H1 (cell line): ENCODE measurements at regions of chr12 and their contacts with region 1.

Region 1: GRCh38 chr12:57031138-57031725 is 14.9 kb upstream of the TAC3 start:
- DNase-seq: no peak
- H3K4me3 ChIP-seq: no peak overlapping the region
- H3K27ac ChIP-seq: no peak overlapping the region
- H3K4me1 ChIP-seq: peaks cover 0 to 8% (median 3%) of the 10 kb centered on the region in 4 experiments; a peak in 5 of 7 replicates
- H3K27me3 ChIP-seq: peaks cover 0 to 3% (median 0%) of the 10 kb centered on the region in 4 experiments; a peak in 1 of 7 replicates
- CTCF ChIP-seq: peak in 2 of 3 experiments; percentile 12 to 46; a peak in 3 of 4 replicates
- EP300 ChIP-seq: no peak
- POLR2A ChIP-seq: no peak
- RAD21 ChIP-seq: peak; percentile 42 to 58

Region 2: DNA sequence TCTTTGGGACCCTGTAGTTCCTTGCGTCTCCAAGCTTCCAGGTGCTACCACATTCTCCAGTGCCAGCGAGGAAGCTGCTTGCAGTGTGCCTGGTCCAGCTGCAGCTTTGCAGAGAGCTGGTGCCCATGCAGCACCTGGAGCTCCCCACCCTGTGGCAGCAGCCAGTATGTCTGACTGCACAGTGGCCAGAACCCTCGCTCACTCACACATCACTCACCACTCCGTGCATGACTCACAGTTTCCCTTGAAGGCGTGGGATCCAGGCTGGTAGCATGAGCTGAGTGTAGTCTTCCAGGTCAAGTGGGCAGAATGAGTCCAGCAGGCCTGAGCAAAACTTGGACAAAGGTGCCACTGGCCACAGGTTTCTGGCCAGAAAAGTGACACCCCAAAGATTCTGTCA is 130.6 kb before region 1 on chr12:
- CTCF ChIA-PET with region 1: no interaction called
- POLR2A ChIA-PET with region 1: no interaction called
- DNase-seq: no peak
- H3K4me3 ChIP-seq: no peak overlapping the region
- H3K27ac ChIP-seq: no peak overlapping the region
- H3K4me1 ChIP-seq: no peaks in the 10 kb centered on the region
- H3K27me3 ChIP-seq: no peaks in the 10 kb centered on the region
- CTCF ChIP-seq: no peak
- EP300 ChIP-seq: no peak
- POLR2A ChIP-seq: no peak
- RAD21 ChIP-seq: no peak

Region 3: DNA sequence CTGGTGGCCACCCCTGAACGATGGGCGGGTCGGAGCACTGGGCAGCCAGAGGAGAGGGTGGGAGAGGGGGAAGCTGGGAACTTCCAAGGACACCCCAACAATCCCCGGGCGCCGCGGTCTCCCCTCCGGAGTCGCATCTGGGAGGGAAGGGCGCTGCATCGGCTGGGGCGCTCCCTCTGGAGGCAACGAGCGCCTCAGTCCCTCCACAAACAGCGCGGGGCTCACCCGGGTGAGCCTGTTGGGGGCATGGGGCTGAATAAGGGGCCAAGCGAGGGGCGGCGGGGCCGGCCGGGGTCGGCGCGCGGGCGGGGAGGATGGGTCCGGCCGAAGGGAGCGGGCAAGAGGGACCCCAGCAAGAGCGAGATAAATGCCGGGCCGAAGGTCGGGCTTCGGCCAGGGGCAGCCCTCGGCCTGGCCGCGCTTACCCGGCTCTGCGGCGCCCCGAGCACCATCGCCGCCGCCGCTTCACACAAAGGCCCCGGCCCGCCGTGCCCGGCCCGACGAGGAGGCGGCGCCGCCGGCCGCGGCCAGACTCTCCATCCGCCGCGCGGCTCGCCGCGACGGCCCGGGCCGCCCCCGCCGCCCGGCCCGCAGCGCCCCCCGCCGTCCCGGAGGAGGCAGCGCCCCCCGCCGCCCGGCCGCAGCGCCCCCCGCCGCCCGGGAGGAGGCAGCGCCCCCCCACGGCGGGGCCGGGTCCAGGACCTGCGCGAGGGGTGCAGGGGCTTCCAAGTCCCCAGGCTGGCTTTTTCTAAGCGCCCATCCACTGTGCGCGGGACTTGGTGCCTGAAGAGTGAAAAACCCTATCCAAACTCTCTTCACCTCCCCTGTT is 25.0 kb before region 1 on chr12 and contains the start of gene ZBTB39:
- CTCF ChIA-PET with region 1: interaction called, 39 read pairs
- POLR2A ChIA-PET with region 1: interaction called, 3 read pairs
- DNase-seq: peak in 1 of 2 experiments; percentile 81
- H3K4me3 ChIP-seq: peak within 1 kb of the TSS; percentile 73 to 96 (median 82)
- H3K27ac ChIP-seq: peak within 1 kb of the TSS; percentile 60; the same call in 1 of the 2 replicates
- H3K4me1 ChIP-seq: peaks cover 2 to 14% (median 8%) of the 10 kb centered on the region in 4 experiments; a peak in 6 of 7 replicates
- H3K27me3 ChIP-seq: no peaks in the 10 kb centered on the region
- CTCF ChIP-seq: peak; percentile 35 to 88 (median 62)
- EP300 ChIP-seq: no peak
- POLR2A ChIP-seq: peak; percentile 56 to 69; a peak in 2 of 3 replicates
- RAD21 ChIP-seq: 0 out of 4 replicates have a peak, but pooled peaks of 1 of the 2 experiments have one; percentile 5
- total RNA-seq, gene ZBTB39: 24.5 and 25.0 TPM in 2 replicates

Region 4: GRCh38 chr12:57012600-57013465 is 18.4 kb before region 1 on chr12:
- CTCF ChIA-PET with region 1: interaction called, 39 read pairs
- POLR2A ChIA-PET with region 1: interaction called, 5 read pairs
- DNase-seq: no peak
- H3K4me3 ChIP-seq: no peak overlapping the region
- H3K27ac ChIP-seq: no peak overlapping the region
- H3K4me1 ChIP-seq: peaks cover 6 to 20% (median 15%) of the 10 kb centered on the region in 4 experiments
- H3K27me3 ChIP-seq: no peaks in the 10 kb centered on the region
- CTCF ChIP-seq: peak; percentile 41 to 59 (median 46)
- EP300 ChIP-seq: no peak
- POLR2A ChIP-seq: no peak
- RAD21 ChIP-seq: peak; percentile 60 to 62

Region 5: DNA sequence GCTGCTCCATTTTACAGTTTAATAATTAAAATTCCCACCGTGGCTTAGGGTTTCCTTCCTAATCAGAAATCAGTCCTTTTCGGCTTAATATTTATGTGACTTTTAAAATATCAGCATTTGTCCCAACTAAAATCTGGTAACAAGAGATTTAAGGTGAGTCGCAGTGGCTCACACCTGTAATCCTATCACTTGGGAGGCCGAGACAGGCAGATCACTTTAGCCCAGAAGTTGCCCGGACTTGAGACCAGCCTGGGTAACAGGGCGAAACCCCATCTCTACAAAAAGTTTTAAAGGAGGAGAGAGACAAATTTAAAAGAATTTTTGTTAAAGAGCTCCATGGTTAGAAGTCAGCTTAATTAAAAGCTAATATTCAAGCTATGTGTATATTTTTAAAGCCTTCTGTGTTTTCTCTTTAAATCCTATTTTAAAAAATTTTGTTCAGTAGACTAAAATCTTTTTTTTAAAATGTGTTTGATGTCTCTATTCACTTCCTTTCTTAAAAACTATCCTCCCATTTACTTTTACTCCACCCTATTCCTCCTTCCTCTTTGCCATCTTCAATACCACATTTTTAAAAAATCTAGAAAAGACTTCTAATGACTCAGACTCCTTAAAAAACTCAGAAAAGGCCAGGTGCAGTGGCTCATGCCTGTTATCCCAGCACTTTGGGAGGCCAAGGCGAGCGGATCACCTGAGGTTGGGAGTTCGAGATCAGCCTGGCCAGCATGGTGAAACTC is 11.1 kb before region 1 on chr12:
- CTCF ChIA-PET with region 1: interaction called, 19 read pairs
- POLR2A ChIA-PET with region 1: interaction called, 5 read pairs
- DNase-seq: no peak
- H3K4me3 ChIP-seq: no peak overlapping the region
- H3K27ac ChIP-seq: no peak overlapping the region
- H3K4me1 ChIP-seq: peaks cover 4 to 9% (median 4%) of the 10 kb centered on the region in 4 experiments
- H3K27me3 ChIP-seq: no peaks in the 10 kb centered on the region
- CTCF ChIP-seq: no peak
- EP300 ChIP-seq: no peak
- POLR2A ChIP-seq: no peak
- RAD21 ChIP-seq: no peak

Region 6: DNA sequence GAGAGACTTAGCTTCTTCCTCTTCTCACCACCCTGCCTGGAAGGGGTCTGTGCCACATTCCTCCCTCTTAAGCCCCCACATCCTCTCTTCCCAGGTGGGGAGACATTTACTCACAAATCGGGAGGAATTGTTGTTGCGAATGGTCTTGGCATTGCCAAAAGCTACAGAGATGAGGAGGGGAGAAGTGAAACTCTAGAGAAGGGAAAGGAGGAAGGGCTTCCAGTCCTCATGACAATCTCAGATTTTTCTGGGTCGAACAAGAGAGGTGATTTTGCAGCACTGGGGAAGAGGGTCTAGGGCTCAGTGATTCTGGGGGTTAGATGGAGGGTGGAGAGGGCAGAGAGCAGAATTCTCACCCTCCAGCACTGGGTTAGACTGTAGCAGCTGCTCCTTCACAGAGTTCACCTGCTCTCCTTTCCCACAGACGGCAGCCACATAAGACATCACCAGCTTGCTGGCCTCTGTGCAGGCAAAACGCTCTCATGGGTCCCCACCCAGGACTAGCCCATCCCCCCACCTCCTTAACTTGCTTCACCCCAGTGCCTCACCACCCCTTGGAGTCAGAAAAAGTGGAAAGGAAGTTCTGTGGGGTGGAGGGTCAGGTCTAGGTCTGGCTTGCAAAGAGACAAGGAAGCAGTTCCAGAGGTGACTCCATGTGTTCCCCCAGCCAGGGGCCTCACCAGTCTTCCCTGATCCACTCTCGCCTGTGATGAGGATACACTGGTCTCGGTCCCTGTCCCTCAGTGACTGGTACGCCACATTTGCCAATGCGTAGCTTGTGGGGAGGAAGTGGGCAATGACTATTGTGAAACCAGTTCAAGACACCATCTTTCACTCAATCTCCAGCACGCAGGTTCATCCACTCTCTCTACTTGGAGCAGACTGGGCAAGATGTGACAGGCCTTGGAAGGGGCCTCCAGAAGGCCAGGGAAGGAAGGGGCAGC is 16.0 kb after region 1 on chr12:
- CTCF ChIA-PET with region 1: interaction called, 51 read pairs
- POLR2A ChIA-PET with region 1: interaction called, 5 read pairs
- DNase-seq: no peak
- H3K4me3 ChIP-seq: no peak overlapping the region
- H3K27ac ChIP-seq: no peak overlapping the region
- H3K4me1 ChIP-seq: no peaks in the 10 kb centered on the region
- H3K27me3 ChIP-seq: no peaks in the 10 kb centered on the region
- CTCF ChIP-seq: no peak
- EP300 ChIP-seq: no peak
- POLR2A ChIP-seq: no peak
- RAD21 ChIP-seq: no peak

Region 7: DNA sequence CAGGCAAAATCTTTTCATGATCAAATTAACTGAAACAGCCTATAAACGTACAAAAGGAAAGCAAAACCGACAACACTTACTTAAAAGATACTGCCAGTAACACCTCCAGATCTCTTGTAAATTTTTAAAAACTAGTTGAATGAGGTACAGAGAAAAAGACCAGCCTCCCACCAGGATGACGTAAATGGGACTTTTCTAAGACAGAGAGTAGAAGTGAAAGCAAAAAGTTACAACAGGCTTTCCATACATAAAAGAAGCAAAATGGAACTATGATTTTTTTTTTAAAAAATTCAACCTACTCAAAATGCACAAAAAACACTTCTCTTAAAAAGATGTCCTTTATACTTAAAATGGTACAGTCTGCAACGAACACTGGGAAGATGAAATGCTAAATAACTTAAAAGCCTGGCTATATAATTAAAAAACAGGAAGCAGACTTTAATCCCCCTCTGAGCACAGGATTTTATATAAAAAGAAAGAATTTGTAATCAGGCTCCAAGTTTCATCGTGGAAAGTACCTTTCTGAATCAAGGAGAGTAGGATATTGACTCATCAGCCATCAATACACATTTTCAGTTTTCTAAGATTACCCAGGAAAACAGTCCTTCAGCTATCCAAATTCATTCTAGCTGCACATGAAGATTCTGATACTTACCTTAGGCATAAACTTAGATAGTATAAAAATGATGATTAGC is 32.9 kb after region 1 on chr12:
- CTCF ChIA-PET with region 1: interaction called, 25 read pairs
- POLR2A ChIA-PET with region 1: interaction called, 4 read pairs
- DNase-seq: no peak
- H3K4me3 ChIP-seq: no peak overlapping the region
- H3K27ac ChIP-seq: no peak overlapping the region
- H3K4me1 ChIP-seq: no peaks in the 10 kb centered on the region
- H3K27me3 ChIP-seq: no peaks in the 10 kb centered on the region
- CTCF ChIP-seq: no peak
- EP300 ChIP-seq: no peak
- POLR2A ChIP-seq: no peak
- RAD21 ChIP-seq: no peak

Region 8: GRCh38 chr12:57069523-57069922 is 38.3 kb after region 1 on chr12:
- CTCF ChIA-PET with region 1: interaction called, 16 read pairs
- POLR2A ChIA-PET with region 1: interaction called, 3 read pairs
- DNase-seq: no peak
- H3K4me3 ChIP-seq: no peak overlapping the region
- H3K27ac ChIP-seq: no peak overlapping the region
- H3K4me1 ChIP-seq: no peaks in the 10 kb centered on the region
- H3K27me3 ChIP-seq: no peaks in the 10 kb centered on the region
- CTCF ChIP-seq: peak in 2 of 3 experiments; percentile 90 to 94; a peak in 3 of 4 replicates
- EP300 ChIP-seq: no peak
- POLR2A ChIP-seq: no peak
- RAD21 ChIP-seq: peak; percentile 95 to 97

Region 9: GRCh38 chr12:57219993-57220754 is 188.9 kb after region 1 on chr12:
- CTCF ChIA-PET with region 1: no interaction called
- POLR2A ChIA-PET with region 1: no interaction called
- DNase-seq: peak in 1 of 2 experiments; percentile 52
- H3K4me3 ChIP-seq: peak overlapping the region; percentile 7 to 46 (median 20); a peak in 3 of 8 replicates
- H3K27ac ChIP-seq: no peak overlapping the region
- H3K4me1 ChIP-seq: peaks cover 0 to 50% (median 39%) of the 10 kb centered on the region in 4 experiments; a peak in 6 of 7 replicates
- H3K27me3 ChIP-seq: peaks cover 87 to 98% (median 98%) of the 10 kb centered on the region in 4 experiments
- CTCF ChIP-seq: no peak
- EP300 ChIP-seq: no peak
- POLR2A ChIP-seq: no peak
- RAD21 ChIP-seq: no peak